H1 (cell line): ENCODE measurements at regions of chr7 and their contacts with region 1.

Region 1: GRCh38 chr7:135281363-135281949 is 47.8 kb downstream of the STRA8 start:
- DNase-seq: peak; percentile 36 to 83
- H3K4me3 ChIP-seq: no peak overlapping the region
- H3K27ac ChIP-seq: no peak overlapping the region
- H3K4me1 ChIP-seq: no peaks in the 10 kb centered on the region
- H3K27me3 ChIP-seq: no peaks in the 10 kb centered on the region
- CTCF ChIP-seq: peak; percentile 80 to 100 (median 99)
- EP300 ChIP-seq: no peak
- POLR2A ChIP-seq: no peak
- RAD21 ChIP-seq: peak; percentile 100

Region 2: DNA sequence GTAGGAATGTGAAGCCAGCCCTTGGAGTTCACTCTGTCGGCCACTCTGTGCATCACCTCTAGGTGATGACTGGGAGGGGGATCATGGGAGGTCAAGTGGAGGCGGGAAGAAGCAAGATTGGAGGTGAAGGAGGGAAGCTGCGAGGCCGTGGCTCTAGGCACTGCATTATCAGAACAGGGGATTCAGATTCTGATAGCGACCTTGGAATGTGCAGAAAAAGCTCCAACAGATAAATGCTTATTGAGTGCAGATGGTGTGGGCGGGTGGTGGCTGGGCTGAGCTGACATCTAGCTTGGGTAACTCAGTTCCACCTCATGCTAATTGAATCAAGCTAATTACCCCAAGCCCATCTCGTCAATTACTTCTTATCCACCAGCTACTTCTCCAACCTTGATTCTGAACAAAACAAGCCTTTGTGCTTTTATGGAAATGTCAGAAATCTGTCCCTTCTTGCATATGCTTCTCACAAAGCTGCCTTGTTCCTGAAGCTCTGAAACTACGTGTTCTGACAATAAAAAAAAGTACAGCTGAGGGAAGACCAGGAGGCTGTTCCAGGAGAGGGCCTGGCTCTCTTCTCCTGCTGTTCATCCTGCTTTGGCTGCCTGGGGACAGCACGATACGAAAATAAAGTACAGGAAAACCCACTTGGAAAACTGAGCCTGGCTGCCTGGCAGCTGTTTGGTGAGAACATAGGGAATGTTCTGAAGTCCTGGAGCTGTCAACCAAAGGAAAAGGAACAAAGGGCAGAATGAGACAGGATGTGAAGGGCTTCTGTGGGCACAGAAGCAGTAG is 20.3 kb before region 1 on chr7:
- CTCF ChIA-PET with region 1: interaction called, 13 read pairs
- POLR2A ChIA-PET with region 1: no interaction called
- DNase-seq: no peak
- H3K4me3 ChIP-seq: no peak overlapping the region
- H3K27ac ChIP-seq: no peak overlapping the region
- H3K4me1 ChIP-seq: peaks cover 0 to 5% (median 4%) of the 10 kb centered on the region in 4 experiments; a peak in 4 of 7 replicates
- H3K27me3 ChIP-seq: no peaks in the 10 kb centered on the region
- CTCF ChIP-seq: no peak
- EP300 ChIP-seq: no peak
- POLR2A ChIP-seq: no peak
- RAD21 ChIP-seq: no peak

Region 3: GRCh38 chr7:135300913-135301765 is 19.7 kb after region 1 on chr7:
- CTCF ChIA-PET with region 1: interaction called, 14 read pairs
- POLR2A ChIA-PET with region 1: no interaction called
- DNase-seq: no peak
- H3K4me3 ChIP-seq: no peak overlapping the region
- H3K27ac ChIP-seq: no peak overlapping the region
- H3K4me1 ChIP-seq: peaks cover 0 to 6% (median 1%) of the 10 kb centered on the region in 4 experiments; a peak in 1 of 7 replicates
- H3K27me3 ChIP-seq: no peaks in the 10 kb centered on the region
- CTCF ChIP-seq: no peak
- EP300 ChIP-seq: no peak
- POLR2A ChIP-seq: no peak
- RAD21 ChIP-seq: no peak

Region 4: GRCh38 chr7:135320277-135320676 is 38.8 kb after region 1 on chr7:
- CTCF ChIA-PET with region 1: interaction called, 49 read pairs
- POLR2A ChIA-PET with region 1: no interaction called
- DNase-seq: no peak
- H3K4me3 ChIP-seq: no peak overlapping the region
- H3K27ac ChIP-seq: no peak overlapping the region
- H3K4me1 ChIP-seq: no peaks in the 10 kb centered on the region
- H3K27me3 ChIP-seq: no peaks in the 10 kb centered on the region
- CTCF ChIP-seq: no peak
- EP300 ChIP-seq: no peak
- POLR2A ChIP-seq: no peak
- RAD21 ChIP-seq: no peak

Region 5: GRCh38 chr7:135335628-135336139 is 54.2 kb after region 1 on chr7:
- CTCF ChIA-PET with region 1: interaction called, 171 read pairs
- POLR2A ChIA-PET with region 1: interaction called, 9 read pairs
- DNase-seq: peak; percentile 93 to 95
- H3K4me3 ChIP-seq: no peak overlapping the region
- H3K27ac ChIP-seq: no peak overlapping the region
- H3K4me1 ChIP-seq: peaks cover 0 to 4% (median 2%) of the 10 kb centered on the region in 4 experiments; a peak in 5 of 7 replicates
- H3K27me3 ChIP-seq: no peaks in the 10 kb centered on the region
- CTCF ChIP-seq: peak; percentile 90 to 98 (median 95)
- EP300 ChIP-seq: peak in 1 of 2 experiments; percentile 32; a peak in 1 of 3 replicates
- POLR2A ChIP-seq: no peak
- RAD21 ChIP-seq: peak; percentile 99 to 100

Region 6: GRCh38 chr7:135349746-135350379 is 68.4 kb after region 1 on chr7:
- CTCF ChIA-PET with region 1: interaction called, 40 read pairs
- POLR2A ChIA-PET with region 1: no interaction called
- DNase-seq: no peak
- H3K4me3 ChIP-seq: no peak overlapping the region
- H3K27ac ChIP-seq: no peak overlapping the region
- H3K4me1 ChIP-seq: no peaks in the 10 kb centered on the region
- H3K27me3 ChIP-seq: no peaks in the 10 kb centered on the region
- CTCF ChIP-seq: no peak
- EP300 ChIP-seq: no peak
- POLR2A ChIP-seq: no peak
- RAD21 ChIP-seq: no peak

Region 7: GRCh38 chr7:135362871-135363270 is 81.4 kb after region 1 on chr7:
- CTCF ChIA-PET with region 1: interaction called, 61 read pairs
- POLR2A ChIA-PET with region 1: no interaction called
- DNase-seq: peak in 1 of 2 experiments; percentile 72
- H3K4me3 ChIP-seq: no peak overlapping the region
- H3K27ac ChIP-seq: no peak overlapping the region
- H3K4me1 ChIP-seq: no peaks in the 10 kb centered on the region
- H3K27me3 ChIP-seq: no peaks in the 10 kb centered on the region
- CTCF ChIP-seq: peak; percentile 60 to 78 (median 75)
- EP300 ChIP-seq: no peak
- POLR2A ChIP-seq: no peak
- RAD21 ChIP-seq: peak; percentile 26 to 44; a peak in 3 of 4 replicates